Activated naive CD4-positive, alpha-beta T cell treated with anti-CD3 and anti-CD28 coated beads, Interleukin-2, amount 10 ng/mL, durations not matched to agents 7 days and 5 days (primary cell): ENCODE measurements at regions of chr14 and their contacts with region 1.

Region 1: DNA sequence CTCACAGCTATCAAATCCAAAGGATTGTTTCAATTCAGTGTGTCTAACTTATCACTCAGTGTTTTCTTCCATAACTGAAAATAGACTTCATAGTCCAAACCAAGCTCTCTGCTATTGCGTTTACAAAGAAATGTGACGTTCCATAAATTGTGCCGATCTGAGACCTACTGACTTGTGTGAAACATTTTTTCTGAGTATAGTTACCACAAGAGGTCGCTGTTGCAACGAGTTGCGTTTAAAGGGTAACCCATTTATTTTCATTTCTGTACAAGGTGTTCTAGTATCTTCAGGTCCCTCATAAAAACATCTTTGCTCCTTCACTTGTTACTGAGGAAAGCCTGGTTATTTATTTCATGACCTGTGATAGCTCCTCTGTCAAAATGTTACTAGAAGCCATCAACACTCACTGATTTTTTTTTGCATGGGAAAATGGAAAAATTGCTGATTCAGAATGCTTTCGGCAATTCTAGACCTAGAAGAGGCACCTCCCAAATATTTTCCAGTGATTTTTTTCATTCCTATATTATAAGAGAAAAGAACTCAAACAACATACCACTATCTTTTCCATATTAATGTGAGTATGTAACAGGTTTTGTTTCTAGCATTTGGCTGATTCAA is 60.9 kb upstream of the OR4E1 start:
- DNase-seq: peak; percentile 56
- H3K4me3 Mint-ChIP-seq: peak overlapping the region; percentile 61
- H3K27ac Mint-ChIP-seq: no peak overlapping the region
- H3K4me1 Mint-ChIP-seq: peaks cover 16% of the 10 kb centered on the region
- H3K27me3 Mint-ChIP-seq: peaks cover 29% of the 10 kb centered on the region

Region 2: GRCh38 chr14:21723431-21724045 is 11.0 kb before region 1 on chr14:
- CTCF ChIA-PET with region 1: interaction called, 19 read pairs
- DNase-seq: peak; percentile 69
- H3K4me3 Mint-ChIP-seq: peak overlapping the region; percentile 73
- H3K27ac Mint-ChIP-seq: peak overlapping the region; percentile 81
- H3K4me1 Mint-ChIP-seq: peaks cover 2% of the 10 kb centered on the region
- H3K27me3 Mint-ChIP-seq: peaks cover 17% of the 10 kb centered on the region